ENCODE measurements at regions of chr21 and their contacts with region 1.

Region 1: DNA sequence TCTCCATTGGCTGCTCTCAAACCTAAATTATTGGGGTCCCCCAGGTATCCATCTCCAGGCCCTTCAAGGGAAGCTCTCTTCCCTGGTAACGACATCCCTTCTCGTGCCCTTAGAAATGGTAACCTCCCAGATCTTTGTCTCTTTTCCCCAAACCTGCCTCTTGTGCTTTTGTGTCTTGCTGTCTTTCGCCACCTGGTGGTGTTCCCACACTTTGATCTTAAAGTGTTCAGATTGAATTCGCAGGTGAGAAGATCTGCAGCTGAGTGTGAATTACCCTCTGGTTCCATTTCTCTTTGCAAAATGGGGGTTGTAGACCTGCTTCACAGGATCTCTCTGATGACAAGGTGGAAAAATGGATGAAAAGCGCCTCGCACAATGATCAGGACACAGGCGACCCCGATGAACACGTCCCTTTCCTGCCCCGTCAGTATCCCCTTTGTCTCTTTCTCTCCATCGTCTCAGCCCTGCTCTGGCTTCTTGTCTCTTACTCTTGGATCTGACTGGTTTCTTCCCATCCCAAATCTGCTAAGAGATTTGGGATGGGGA is 53.1 kb downstream of the DOP1B start:
- DNase-seq: peak; percentile 75
- H3K4me3 Mint-ChIP-seq: no peak overlapping the region
- H3K27ac Mint-ChIP-seq: peak overlapping the region; percentile 29
- H3K4me1 Mint-ChIP-seq: peaks cover 22% of the 10 kb centered on the region
- H3K27me3 Mint-ChIP-seq: no peaks in the 10 kb centered on the region

Region 2: DNA sequence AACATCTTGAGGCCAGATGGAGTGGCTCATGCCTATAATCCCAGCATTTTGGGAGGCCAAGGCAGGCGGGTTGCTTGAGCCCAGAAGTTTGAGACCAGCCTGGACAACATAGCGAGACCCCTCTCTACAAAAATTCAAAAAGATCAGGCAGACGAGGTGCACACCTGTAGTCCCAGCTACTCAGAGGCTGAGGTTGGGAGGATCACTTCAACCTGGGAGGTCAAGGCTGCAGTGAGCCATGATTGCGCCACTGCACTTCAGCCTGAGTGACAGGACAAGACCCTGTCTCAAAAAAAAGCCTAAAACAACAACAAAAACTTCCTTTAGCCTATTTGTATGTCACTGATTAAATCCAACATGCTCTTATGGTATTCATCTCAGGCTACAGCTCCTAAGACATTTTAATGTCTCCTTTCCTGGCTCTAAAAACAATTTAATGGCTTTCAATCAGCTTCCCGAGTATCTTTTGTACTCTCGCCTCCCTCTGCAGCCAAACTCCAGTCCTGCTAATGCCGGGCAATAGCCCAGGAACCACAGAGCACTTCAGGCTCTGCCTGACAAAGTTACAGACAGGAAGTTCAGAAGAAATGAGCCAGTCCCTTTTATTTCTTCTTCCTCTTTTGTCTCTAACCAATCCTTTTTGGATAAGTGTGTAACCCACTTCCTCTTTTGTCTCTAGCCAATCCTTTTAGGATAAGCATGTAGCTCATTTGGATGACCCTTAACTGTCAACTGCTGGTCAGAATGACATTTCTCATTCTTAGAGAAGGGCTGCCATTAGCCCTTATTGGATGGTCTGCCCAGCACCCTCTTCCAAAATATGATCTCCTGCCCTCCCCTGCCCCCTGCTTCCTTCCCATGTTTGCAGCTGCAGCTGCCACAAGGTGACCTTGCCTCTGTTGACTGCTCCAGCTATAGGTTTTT is 59.6 kb before region 1 on chr21:
- CTCF ChIA-PET with region 1: interaction called, 62 read pairs
- DNase-seq: no peak
- H3K4me3 Mint-ChIP-seq: no peak overlapping the region
- H3K27ac Mint-ChIP-seq: peak overlapping the region; percentile 88
- H3K4me1 Mint-ChIP-seq: peaks cover 74% of the 10 kb centered on the region
- H3K27me3 Mint-ChIP-seq: peaks cover 3% of the 10 kb centered on the region

Region 3: DNA sequence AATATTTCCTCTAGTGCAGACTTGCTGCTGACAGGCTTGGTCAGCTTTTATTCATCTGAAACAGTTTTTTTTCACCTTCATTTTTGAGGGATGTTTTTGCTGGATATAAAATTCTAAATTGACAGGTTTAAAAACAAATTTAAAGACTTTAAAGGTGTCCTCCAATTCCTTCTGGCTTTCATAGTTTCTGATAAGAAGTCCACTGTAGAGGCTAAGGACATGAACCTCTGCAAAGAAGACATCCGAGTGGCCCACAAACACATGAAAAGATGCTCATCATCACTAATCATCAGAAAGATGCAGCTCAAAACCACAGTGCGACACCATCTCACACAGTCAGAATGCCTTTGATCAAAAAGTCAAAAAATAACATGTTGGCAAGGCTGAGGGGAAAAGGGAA is 1114.9 kb after region 1 on chr21:
- CTCF ChIA-PET with region 1: no interaction called
- DNase-seq: no peak
- H3K4me3 Mint-ChIP-seq: no peak overlapping the region
- H3K27ac Mint-ChIP-seq: no peak overlapping the region
- H3K4me1 Mint-ChIP-seq: no peaks in the 10 kb centered on the region
- H3K27me3 Mint-ChIP-seq: peaks cover 8% of the 10 kb centered on the region